MCF 10A (cell line): ENCODE measurements at regions of chr1 and their contacts with region 1.

Region 1: GRCh38 chr1:152001391-152002249 is 8.0 kb upstream of the S100A10 start:
- DNase-seq: peak; percentile 96
- H3K4me3 Mint-ChIP-seq: peak overlapping the region; percentile 28
- H3K27ac Mint-ChIP-seq: peak overlapping the region; percentile 33
- H3K4me1 Mint-ChIP-seq: peaks cover 55% of the 10 kb centered on the region
- H3K27me3 Mint-ChIP-seq: no peaks in the 10 kb centered on the region
- CTCF ChIP-seq: peak; percentile 98

Region 2: GRCh38 chr1:151790071-151790940 is 211.3 kb before region 1 on chr1 and contains the start of gene TDRKH:
- CTCF ChIA-PET with region 1: no interaction called
- POLR2A ChIA-PET with region 1: no interaction called
- intact Hi-C with region 1: no loop called
- DNase-seq: peak; percentile 100
- H3K4me3 Mint-ChIP-seq: peak within 1 kb of the TSS; percentile 83
- H3K27ac Mint-ChIP-seq: peak within 1 kb of the TSS; percentile 47
- H3K4me1 Mint-ChIP-seq: peaks cover 9% of the 10 kb centered on the region
- H3K27me3 Mint-ChIP-seq: no peaks in the 10 kb centered on the region
- CTCF ChIP-seq: peak; percentile 26
- total RNA-seq, gene TDRKH: 5.6 and 10.6 TPM in 2 replicates

Region 3: DNA sequence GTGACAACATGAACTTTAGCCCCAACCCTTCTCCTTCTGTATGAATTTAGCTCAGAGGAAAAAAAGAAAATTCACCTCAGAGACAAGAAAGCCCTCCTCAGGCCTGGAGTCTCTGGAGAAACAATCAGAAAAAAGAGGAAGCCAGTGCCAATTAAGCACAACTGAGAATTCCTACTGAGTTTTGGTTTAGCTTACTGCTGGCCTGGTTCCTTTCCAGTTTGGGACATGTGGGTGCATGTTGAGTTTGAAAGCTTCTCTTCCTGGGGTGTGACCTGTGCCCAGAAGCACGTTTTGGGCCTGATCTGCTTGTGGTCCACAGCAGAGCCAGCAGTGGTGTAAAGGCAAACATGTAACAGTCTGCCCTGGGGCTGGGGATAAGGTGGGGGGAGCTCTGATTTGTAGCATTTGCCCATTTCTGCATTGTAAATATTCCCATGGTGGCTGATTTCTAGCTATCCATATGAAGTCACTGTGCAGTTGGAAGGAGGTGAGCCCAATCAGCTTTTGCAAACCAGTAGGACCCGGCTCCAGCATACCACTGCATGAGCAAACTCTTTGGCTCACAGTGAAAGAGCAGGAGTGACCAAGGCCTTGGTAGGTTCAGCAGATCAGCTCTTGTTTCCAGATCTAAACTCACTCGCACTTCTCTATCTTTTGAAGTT is 143.5 kb before region 1 on chr1:
- CTCF ChIA-PET with region 1: interaction called, 10 read pairs
- POLR2A ChIA-PET with region 1: interaction called, 5 read pairs
- intact Hi-C with region 1: no loop called
- DNase-seq: peak; percentile 66
- H3K4me3 Mint-ChIP-seq: no peak overlapping the region
- H3K27ac Mint-ChIP-seq: peak overlapping the region; percentile 84
- H3K4me1 Mint-ChIP-seq: peaks cover 40% of the 10 kb centered on the region
- H3K27me3 Mint-ChIP-seq: no peaks in the 10 kb centered on the region
- CTCF ChIP-seq: no peak

Region 4: DNA sequence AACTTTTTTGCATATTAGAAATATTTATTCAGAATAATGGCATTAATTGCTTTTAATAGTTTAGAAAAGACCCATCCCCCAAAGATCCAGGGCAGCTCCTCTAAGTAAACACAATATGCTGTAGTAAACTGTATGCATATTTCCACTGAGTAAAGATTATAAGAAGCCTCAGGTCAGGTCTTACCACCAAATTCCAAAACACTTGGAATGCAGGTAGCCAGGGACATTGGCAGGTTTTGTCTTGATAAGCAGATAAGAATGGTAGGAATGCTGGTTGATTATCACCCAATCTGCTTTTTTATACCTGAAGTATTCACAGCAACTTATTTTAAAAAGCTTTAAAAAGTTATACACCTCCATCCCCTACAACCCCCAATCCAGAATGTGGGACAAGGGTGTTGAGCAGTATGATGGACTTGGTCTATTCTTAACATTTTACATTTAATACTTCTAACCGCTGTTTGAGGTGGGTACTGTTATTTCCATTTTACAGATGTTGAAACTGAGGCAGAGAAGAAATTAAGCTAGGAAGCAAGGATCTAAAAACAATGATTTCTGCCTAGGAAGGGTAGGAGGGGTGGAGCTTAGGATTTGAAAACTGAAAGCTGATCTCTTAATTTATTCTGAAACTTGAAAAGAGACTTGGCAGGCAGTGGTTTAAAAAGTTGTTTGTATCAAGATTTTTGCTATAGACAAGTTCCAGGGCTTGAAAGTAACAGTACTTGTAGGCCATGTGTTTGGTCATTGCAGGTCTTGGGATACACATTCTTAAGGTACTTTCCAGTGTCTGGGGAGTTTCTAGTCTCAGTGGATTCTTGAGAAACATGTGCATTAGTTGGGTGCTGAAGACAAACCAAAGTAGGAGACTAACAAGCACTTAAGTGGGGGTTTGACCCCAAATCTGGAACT is 76.7 kb before region 1 on chr1:
- CTCF ChIA-PET with region 1: interaction called, 350 read pairs
- POLR2A ChIA-PET with region 1: interaction called, 453 read pairs
- intact Hi-C with region 1: no loop called
- DNase-seq: no peak
- H3K4me3 Mint-ChIP-seq: no peak overlapping the region
- H3K27ac Mint-ChIP-seq: no peak overlapping the region
- H3K4me1 Mint-ChIP-seq: peaks cover 5% of the 10 kb centered on the region
- H3K27me3 Mint-ChIP-seq: no peaks in the 10 kb centered on the region
- CTCF ChIP-seq: no peak

Region 5: DNA sequence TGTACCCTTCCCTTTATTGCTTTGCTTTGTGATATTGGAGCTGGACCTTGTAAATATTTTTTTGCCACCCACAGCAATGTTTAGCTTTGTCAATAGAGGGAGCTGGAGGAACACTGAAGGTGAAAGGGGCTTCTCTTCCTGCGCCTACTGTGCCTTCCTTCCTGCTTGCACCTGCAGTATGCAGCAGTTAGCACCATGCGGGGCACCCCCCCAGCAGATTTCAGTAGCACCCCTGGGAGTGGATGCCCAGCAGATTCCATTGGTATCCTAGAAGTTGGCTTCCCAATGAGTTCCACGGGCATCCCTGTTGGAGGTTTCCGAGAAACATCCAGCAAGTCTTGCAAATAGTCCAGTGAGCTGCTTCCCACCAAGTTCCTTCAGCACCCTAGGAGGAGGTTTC is 33.6 kb before region 1 on chr1:
- CTCF ChIA-PET with region 1: interaction called, 543 read pairs
- POLR2A ChIA-PET with region 1: interaction called, 1,089 read pairs
- intact Hi-C with region 1: loop called (anchors 1 kb)
- DNase-seq: peak; percentile 86
- H3K4me3 Mint-ChIP-seq: no peak overlapping the region
- H3K27ac Mint-ChIP-seq: no peak overlapping the region
- H3K4me1 Mint-ChIP-seq: peaks cover 34% of the 10 kb centered on the region
- H3K27me3 Mint-ChIP-seq: no peaks in the 10 kb centered on the region
- CTCF ChIP-seq: peak; percentile 91

Region 6: GRCh38 chr1:152167835-152168519 is 166.4 kb after region 1 on chr1:
- CTCF ChIA-PET with region 1: interaction called, 5 read pairs
- POLR2A ChIA-PET with region 1: interaction called, 13 read pairs
- intact Hi-C with region 1: no loop called
- DNase-seq: peak; percentile 100
- H3K4me3 Mint-ChIP-seq: peak overlapping the region; percentile 49
- H3K27ac Mint-ChIP-seq: peak overlapping the region; percentile 99
- H3K4me1 Mint-ChIP-seq: peaks cover 70% of the 10 kb centered on the region
- H3K27me3 Mint-ChIP-seq: no peaks in the 10 kb centered on the region
- CTCF ChIP-seq: no peak